ENCODE measurements at regions of chr3 and their contacts with region 1.

Region 1: DNA sequence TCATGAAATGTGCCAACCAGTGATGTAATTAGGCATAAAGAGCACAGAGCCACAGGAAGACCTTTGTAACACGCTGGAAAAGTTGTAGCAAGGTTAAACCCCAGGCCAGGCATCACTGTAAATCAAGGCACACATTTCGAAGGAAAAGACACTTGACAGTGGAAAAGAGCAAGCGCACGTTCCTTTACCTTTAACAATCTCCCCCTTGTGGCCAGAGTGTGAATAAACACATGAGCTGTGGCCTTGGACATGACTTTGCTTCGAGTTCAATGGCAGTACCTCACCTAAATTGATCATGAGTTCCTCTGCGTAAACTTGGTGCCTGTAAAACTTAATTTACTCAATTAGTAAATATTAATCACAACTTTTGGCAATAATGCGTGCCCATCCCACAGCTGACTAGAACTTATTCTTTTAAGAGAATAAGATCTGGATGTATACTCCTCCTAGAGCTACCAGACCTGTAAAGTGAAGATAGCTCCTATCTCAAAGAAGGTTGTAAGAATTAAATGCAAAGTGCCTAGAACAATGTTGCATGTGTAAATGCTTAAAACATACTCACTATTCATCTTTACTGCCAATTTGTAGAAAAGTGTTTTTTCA is 757.0 kb upstream of the NECTIN3 start:
- DNase-seq: peak; percentile 18
- H3K4me3 Mint-ChIP-seq: no peak overlapping the region
- H3K27ac Mint-ChIP-seq: no peak overlapping the region
- H3K4me1 Mint-ChIP-seq: no peaks in the 10 kb centered on the region
- H3K27me3 Mint-ChIP-seq: no peaks in the 10 kb centered on the region

Region 2: DNA sequence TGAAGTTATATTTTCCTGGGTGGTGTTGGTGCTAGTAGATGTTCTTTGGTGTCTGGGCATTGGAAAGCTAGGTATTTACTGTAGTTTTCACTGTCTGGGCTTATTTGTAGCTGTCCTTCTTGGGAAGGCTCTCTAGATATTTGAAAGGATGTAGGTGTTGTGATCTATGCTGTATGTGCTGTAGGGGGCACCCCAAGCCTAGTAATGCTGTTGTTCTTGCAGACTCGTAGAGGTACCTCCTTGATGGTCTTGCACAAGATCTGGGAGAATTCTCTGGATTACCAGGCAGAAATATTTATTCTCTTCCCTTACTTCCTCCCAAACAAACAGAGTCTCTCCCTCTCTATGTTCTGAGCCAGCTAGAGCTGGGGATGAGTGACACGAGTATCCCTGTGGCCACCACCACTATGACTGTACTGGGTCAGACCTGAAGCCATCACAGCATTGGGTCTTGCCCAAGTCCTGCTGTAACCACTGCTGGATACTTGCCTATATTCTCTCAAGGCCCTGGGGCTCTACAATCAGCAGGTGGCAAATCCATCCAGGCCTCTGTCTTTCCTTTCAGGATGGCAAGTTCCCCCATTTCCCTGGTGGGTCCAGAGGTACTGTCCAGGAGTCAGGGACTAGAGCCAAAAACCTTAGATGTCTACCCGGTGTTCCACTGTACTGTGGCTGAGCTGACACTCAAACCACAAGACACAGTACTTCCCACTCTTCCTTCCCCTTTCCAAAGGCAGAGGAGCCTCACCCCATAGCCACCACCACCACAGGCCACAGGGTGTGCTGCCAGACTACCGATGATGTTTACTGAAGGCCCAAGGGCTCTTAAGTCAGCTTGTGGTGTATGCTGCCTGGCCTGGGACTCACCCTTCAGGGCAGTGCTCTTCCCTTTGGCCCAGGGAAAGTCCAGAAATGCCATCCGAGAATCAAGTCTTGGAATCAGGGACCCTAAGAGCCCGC is 782.1 kb before region 1 on chr3:
- intact Hi-C with region 1: loop called (anchors 2 kb)
- DNase-seq: no peak
- H3K4me3 Mint-ChIP-seq: no peak overlapping the region
- H3K27ac Mint-ChIP-seq: no peak overlapping the region
- H3K4me1 Mint-ChIP-seq: no peaks in the 10 kb centered on the region
- H3K27me3 Mint-ChIP-seq: no peaks in the 10 kb centered on the region

Region 3: GRCh38 chr3:109731620-109732473 is 582.8 kb before region 1 on chr3:
- intact Hi-C with region 1: loop called (anchors 2 kb)
- DNase-seq: peak; percentile 21
- H3K4me3 Mint-ChIP-seq: no peak overlapping the region
- H3K27ac Mint-ChIP-seq: no peak overlapping the region
- H3K4me1 Mint-ChIP-seq: no peaks in the 10 kb centered on the region
- H3K27me3 Mint-ChIP-seq: peaks cover 1% of the 10 kb centered on the region

Region 4: GRCh38 chr3:110296885-110297284 is 17.7 kb before region 1 on chr3:
- intact Hi-C with region 1: no loop called
- DNase-seq: no peak
- H3K4me3 Mint-ChIP-seq: no peak overlapping the region
- H3K27ac Mint-ChIP-seq: no peak overlapping the region
- H3K4me1 Mint-ChIP-seq: no peaks in the 10 kb centered on the region
- H3K27me3 Mint-ChIP-seq: no peaks in the 10 kb centered on the region